ENCODE measurements at regions of chrX and their contacts with region 1.

Region 1: DNA sequence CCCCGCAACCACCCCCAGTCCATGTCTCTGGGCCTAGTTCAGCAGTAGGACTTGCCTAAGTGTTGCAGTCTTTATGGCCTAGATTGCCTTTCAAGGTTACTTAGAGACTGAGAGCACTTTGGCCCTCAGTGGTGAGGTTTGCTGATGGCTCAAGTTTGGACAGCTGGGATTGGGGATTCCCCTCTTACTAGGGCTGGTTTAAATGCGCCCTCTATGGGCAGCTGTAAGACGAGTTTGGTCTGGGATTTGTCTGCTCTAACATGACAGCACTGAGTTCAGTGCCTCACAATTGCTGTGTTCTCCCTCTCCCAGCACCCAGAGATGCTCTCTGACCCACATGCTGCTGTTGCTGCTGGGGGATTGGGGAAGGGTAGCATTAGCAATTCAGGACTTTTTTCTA is 23.1 kb downstream of the DACH2 start:
- DNase-seq: peak; percentile 35
- ATAC-seq: peak; percentile 87
- H3K4me3 ChIP-seq: no peak overlapping the region
- H3K27ac ChIP-seq: no peak overlapping the region
- H3K4me1 ChIP-seq: no peaks in the 10 kb centered on the region
- H3K27me3 ChIP-seq: no peaks in the 10 kb centered on the region
- CTCF ChIP-seq: peak; percentile 70
- EP300 ChIP-seq: no peak
- POLR2A ChIP-seq: no peak
- RAD21 ChIP-seq: no peak

Region 2: DNA sequence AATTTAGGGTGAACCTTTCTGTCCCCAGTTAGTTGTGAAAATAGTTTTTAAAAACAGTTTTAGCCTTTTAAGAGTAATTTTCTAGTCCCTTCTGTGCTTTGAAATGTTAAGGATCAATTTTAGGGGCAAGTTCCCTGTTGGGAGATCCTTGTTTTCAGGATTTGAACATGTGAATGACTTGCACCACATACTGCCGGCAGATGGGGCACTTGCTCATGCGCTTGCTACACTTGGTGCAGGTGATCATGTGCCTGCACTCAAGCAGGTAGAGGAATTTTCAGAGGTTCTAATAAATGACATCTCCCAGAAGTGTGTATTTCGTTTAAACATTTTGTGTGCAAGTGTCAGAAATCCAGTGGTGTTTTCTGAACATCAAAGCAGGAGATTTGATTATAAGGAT is 319.9 kb before region 1 on chrX:
- CTCF ChIA-PET with region 1: no interaction called
- POLR2A ChIA-PET with region 1: no interaction called
- in situ Hi-C with region 1: no loop called
- intact Hi-C with region 1: loop called (anchors 1 kb)
- DNase-seq: peak; percentile 14
- ATAC-seq: peak; percentile 89
- H3K4me3 ChIP-seq: no peak overlapping the region
- H3K27ac ChIP-seq: no peak overlapping the region
- H3K4me1 ChIP-seq: no peaks in the 10 kb centered on the region
- H3K27me3 ChIP-seq: no peaks in the 10 kb centered on the region; a peak in 1 of 5 replicates
- CTCF ChIP-seq: peak; percentile 70
- EP300 ChIP-seq: no peak
- POLR2A ChIP-seq: no peak
- RAD21 ChIP-seq: no peak

Region 3: GRCh38 chrX:87272491-87272890 is 1101.1 kb after region 1 on chrX:
- CTCF ChIA-PET with region 1: no interaction called
- POLR2A ChIA-PET with region 1: no interaction called
- in situ Hi-C with region 1: no loop called
- intact Hi-C with region 1: no loop called
- DNase-seq: no peak
- ATAC-seq: no peak
- H3K4me3 ChIP-seq: no peak overlapping the region
- H3K27ac ChIP-seq: no peak overlapping the region
- H3K4me1 ChIP-seq: no peaks in the 10 kb centered on the region
- H3K27me3 ChIP-seq: no peaks in the 10 kb centered on the region
- CTCF ChIP-seq: no peak
- EP300 ChIP-seq: no peak
- POLR2A ChIP-seq: no peak
- RAD21 ChIP-seq: no peak

Measured in HepG2 (cell line).